Heart right ventricle (tissue), 16 donors: ENCODE measurements at regions of chr15 and their contacts with region 1.

Region 1: GRCh38 chr15:78979456-78980320 is 34.8 kb upstream of the CTSH start:
- DNase-seq: peak in 1 of 2 donors; percentile 71
- ATAC-seq: peak; percentile 56 to 75 (median 68)
- H3K4me3 ChIP-seq: no peak overlapping the region
- H3K27ac ChIP-seq: peak overlapping the region in 2 of 10 donors; percentile 2 to 5
- H3K4me1 ChIP-seq: peaks cover 0 to 43% (median 8%) of the 10 kb centered on the region in 9 donors
- H3K27me3 ChIP-seq: no peaks in the 10 kb centered on the region
- CTCF ChIP-seq: peak; percentile 63 to 79 (median 70)

Region 2: DNA sequence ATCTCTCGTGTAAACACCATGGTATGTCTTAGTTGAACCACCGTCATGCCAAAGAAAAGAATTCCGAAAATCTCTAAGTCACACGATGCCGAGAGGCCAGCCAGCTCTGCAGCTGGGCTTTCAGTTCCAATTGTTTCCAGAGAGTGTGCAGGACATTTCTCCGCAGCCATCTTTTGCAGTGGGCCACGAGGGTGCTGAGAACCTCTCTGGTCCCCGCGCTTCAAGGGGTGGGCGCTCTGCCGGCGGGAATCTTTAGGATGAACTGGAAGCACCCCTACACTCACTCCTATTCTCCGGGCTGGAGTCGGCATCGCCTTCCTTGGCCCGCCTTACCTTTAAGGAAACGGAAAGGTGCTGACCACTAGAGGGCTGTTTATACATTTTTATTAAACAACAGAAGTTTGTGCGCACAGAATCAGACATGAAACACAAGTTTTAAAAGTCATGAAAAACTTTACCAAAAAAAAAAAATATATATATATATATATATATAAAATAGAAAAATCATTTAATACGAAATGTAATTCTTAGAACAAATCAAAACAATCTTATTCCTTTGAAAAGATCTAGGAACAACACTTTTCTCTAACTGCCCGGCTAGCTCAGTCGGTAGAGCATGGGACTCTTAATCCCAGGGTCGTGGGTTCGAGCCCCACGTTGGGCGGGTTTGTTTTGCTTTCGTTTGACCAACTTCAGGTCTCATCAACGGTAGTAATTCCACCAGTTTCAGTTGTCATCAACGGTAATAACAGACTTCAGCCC is 119.5 kb before region 1 on chr15:
- intact Hi-C with region 1: loop called in 1 of 10 experiments (anchors 2 kb)
- DNase-seq: peak; percentile 55 to 74
- ATAC-seq: peak; percentile 66 to 95 (median 82)
- H3K4me3 ChIP-seq: peak overlapping the region in 9 of 10 donors; percentile 21 to 59 (median 49)
- H3K27ac ChIP-seq: peak overlapping the region in 7 of 10 donors; percentile 23 to 73 (median 38)
- H3K4me1 ChIP-seq: peaks cover 0 to 10% (median 0%) of the 10 kb centered on the region in 9 donors
- H3K27me3 ChIP-seq: no peaks in the 10 kb centered on the region
- CTCF ChIP-seq: peak; percentile 29 to 73 (median 59)